Activated B cell treated with CpG ODN at 0.5 μM for 24 hours (primary cell): ENCODE measurements at regions of chr12 and their contacts with region 1.

Region 1: DNA sequence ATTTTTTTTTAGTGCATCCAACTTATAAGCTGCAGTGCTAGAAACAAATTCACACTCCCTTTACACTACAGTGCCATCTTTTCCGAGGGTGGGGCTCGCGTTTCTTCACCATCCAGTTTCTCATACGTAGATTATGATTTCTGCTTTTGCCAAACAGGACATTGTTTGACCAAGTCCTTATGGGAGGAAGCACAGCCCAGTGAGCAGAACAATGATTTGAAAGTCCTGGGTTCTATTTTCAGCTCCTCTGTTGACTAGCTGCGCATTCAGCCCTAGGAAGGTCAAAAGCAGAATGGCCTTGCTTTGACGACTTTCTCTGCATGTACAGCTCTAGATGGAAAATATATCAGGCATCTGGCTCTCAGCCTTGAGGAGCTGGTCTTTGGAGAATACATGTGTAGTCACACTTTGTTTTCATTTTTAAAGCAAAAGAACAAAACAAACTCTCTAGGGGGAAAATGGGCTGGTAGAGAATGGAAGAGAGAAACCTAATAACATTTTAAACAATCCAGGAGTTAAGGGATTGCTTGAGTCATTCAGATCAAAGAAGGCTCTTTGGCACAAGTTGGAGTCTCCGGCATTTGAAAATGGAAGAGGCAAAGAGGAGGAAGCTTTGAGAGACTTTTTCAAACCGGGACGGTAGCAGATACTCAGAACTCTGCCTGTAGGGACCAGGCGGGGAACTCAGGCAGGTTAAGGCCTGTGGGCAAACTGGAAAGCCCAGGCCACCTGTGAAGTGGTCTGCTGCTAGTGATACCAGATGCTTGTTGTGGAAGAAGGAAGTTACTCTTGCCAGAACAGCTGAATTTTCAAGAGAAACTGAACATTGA is 257.3 kb upstream of the PLEKHG7 start:
- DNase-seq: peak; percentile 55
- ATAC-seq: peak; percentile 71
- H3K4me3 Mint-ChIP-seq: peak overlapping the region; percentile 67
- H3K27ac Mint-ChIP-seq: peak overlapping the region; percentile 97
- H3K4me1 Mint-ChIP-seq: peaks cover 95% of the 10 kb centered on the region
- H3K27me3 Mint-ChIP-seq: no peaks in the 10 kb centered on the region
- CTCF ChIP-seq: no peak

Region 2: GRCh38 chr12:92034858-92035401 is 410.5 kb before region 1 on chr12:
- CTCF ChIA-PET with region 1: no interaction called
- POLR2A ChIA-PET with region 1: interaction called, 3 read pairs
- intact Hi-C with region 1: loop called (anchors 1 kb)
- DNase-seq: peak; percentile 50
- ATAC-seq: peak; percentile 91
- H3K4me3 Mint-ChIP-seq: peak overlapping the region; percentile 67
- H3K27ac Mint-ChIP-seq: peak overlapping the region; percentile 86
- H3K4me1 Mint-ChIP-seq: peaks cover 65% of the 10 kb centered on the region
- H3K27me3 Mint-ChIP-seq: no peaks in the 10 kb centered on the region
- CTCF ChIP-seq: no peak

Region 3: DNA sequence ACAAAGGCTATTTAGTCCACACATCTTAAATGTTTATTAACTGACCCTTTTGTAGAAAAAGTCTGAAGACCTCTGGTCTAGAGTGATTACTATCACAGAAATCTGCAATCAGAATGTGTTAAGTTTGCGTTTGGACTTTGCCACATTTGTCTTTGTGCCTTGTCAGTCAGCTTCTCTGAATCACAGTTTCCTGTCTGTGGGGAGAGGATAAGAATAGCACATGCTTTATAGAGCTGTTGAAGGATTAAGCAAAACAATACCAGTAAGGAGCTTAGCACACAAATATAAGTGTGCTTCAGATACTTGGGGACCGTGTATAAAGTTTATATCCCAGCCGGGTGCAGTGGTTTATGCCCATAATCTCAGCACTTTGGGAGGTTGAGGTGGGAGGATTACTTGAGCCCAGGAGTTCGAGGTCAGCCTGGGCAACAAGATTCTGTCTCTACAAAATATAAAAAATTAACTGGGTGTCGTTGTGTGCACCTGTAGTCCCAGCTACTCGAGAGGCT is 236.8 kb before region 1 on chr12:
- CTCF ChIA-PET with region 1: no interaction called
- POLR2A ChIA-PET with region 1: interaction called, 19 read pairs
- intact Hi-C with region 1: no loop called
- DNase-seq: no peak
- ATAC-seq: peak; percentile 84
- H3K4me3 Mint-ChIP-seq: peak overlapping the region; percentile 61
- H3K27ac Mint-ChIP-seq: peak overlapping the region; percentile 70
- H3K4me1 Mint-ChIP-seq: peaks cover 28% of the 10 kb centered on the region
- H3K27me3 Mint-ChIP-seq: no peaks in the 10 kb centered on the region
- CTCF ChIP-seq: no peak

Region 4: DNA sequence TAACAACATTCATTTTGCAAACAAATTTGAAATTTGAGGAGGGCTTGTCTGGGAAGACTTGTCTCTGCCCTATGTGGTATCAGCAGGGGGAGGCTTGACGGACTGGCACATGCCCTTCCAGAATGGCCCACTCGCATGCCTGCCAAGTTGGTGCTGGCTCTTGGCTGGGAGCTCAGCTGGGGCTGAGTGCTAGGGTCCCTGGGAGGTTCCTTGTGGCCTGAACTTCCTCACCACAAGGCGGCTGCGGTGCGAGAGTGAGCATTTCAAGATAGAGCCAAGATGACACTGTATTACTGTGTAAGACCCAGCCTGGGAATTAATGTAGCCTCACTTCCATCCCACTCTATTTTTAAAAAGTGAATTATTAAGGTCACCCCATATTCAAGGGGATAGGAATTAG is 14.3 kb before region 1 on chr12:
- CTCF ChIA-PET with region 1: interaction called, 5 read pairs
- POLR2A ChIA-PET with region 1: interaction called, 56 read pairs
- intact Hi-C with region 1: loop called (anchors 1 kb)
- DNase-seq: peak; percentile 27
- ATAC-seq: peak; percentile 60
- H3K4me3 Mint-ChIP-seq: no peak overlapping the region
- H3K27ac Mint-ChIP-seq: peak overlapping the region; percentile 94
- H3K4me1 Mint-ChIP-seq: peaks cover 80% of the 10 kb centered on the region
- H3K27me3 Mint-ChIP-seq: no peaks in the 10 kb centered on the region
- CTCF ChIP-seq: no peak

Region 5: GRCh38 chr12:92485351-92486348 is 40.2 kb after region 1 on chr12:
- CTCF ChIA-PET with region 1: interaction called, 3 read pairs
- POLR2A ChIA-PET with region 1: interaction called, 13 read pairs
- intact Hi-C with region 1: loop called (anchors 1 kb)
- DNase-seq: no peak
- ATAC-seq: peak; percentile 41
- H3K4me3 Mint-ChIP-seq: peak overlapping the region; percentile 50
- H3K27ac Mint-ChIP-seq: peak overlapping the region; percentile 85
- H3K4me1 Mint-ChIP-seq: peaks cover 88% of the 10 kb centered on the region
- H3K27me3 Mint-ChIP-seq: no peaks in the 10 kb centered on the region
- CTCF ChIP-seq: no peak

Region 6: GRCh38 chr12:92539113-92539749 is 93.8 kb after region 1 on chr12:
- CTCF ChIA-PET with region 1: no interaction called
- POLR2A ChIA-PET with region 1: interaction called, 12 read pairs
- intact Hi-C with region 1: loop called (anchors 1 kb)
- DNase-seq: no peak
- ATAC-seq: peak; percentile 32
- H3K4me3 Mint-ChIP-seq: peak overlapping the region; percentile 73
- H3K27ac Mint-ChIP-seq: peak overlapping the region; percentile 97
- H3K4me1 Mint-ChIP-seq: peaks cover 79% of the 10 kb centered on the region
- H3K27me3 Mint-ChIP-seq: no peaks in the 10 kb centered on the region
- CTCF ChIP-seq: no peak

Region 7: GRCh38 chr12:92593734-92594402 is 148.4 kb after region 1 on chr12:
- CTCF ChIA-PET with region 1: no interaction called
- POLR2A ChIA-PET with region 1: interaction called, 8 read pairs
- intact Hi-C with region 1: loop called (anchors 1 kb)
- DNase-seq: peak; percentile 49
- ATAC-seq: peak; percentile 92
- H3K4me3 Mint-ChIP-seq: peak overlapping the region; percentile 75
- H3K27ac Mint-ChIP-seq: peak overlapping the region; percentile 96
- H3K4me1 Mint-ChIP-seq: peaks cover 46% of the 10 kb centered on the region
- H3K27me3 Mint-ChIP-seq: no peaks in the 10 kb centered on the region
- CTCF ChIP-seq: no peak